ENCODE measurements at regions of chr20 and their contacts with region 1.

Region 1: DNA sequence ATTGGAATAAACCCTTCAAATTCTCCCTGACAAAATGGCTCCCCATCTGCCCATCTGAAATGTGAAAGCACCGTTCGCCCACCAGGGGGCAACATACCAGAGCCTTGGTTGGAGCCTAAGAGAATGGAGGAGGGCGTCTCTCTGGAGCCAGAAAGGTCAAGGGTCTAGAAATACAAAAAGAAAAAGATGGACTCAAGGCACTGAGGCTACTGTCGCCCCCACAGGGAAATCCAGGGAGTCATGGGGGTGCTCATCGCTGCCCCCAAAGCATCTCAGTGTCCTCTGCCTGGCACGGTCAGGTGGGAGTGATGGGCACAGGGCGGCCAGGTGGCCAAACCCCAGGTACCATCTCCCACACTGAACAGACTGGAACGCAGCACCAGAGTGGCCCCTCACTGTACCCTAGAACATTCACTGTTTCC is 136.3 kb downstream of the ZMYND8 start:
- DNase-seq: peak; percentile 61
- ATAC-seq: peak; percentile 60
- H3K4me3 ChIP-seq: no peak overlapping the region
- H3K27ac ChIP-seq: no peak overlapping the region
- H3K4me1 ChIP-seq: peaks cover 15% of the 10 kb centered on the region
- H3K27me3 ChIP-seq: no peaks in the 10 kb centered on the region; a peak in 1 of 5 replicates
- CTCF ChIP-seq: peak; percentile 71
- EP300 ChIP-seq: no peak
- POLR2A ChIP-seq: no peak
- RAD21 ChIP-seq: peak; percentile 42; the same call in 1 of the 2 replicates

Region 2: DNA sequence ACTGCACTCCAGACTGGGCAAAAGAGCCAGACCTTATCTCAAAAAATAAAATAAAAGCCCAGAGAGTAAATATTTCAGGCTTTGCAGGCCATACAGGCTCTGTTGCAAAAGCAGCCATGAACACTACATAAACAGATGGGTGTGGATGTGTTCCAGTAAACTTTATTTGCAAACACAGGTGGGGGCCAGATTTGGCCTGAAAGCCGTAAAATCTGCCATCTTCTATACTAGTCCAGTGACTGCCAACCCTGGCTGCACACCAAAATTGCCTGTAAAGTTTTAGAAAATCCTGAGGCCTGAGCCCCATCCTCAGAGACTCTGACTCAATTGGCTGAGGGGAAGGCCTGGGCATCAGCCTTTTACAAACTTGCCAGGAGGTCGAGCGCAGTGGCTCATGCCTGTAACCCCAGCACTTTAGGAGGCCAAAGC is 32.7 kb after region 1 on chr20:
- CTCF ChIA-PET with region 1: no interaction called
- POLR2A ChIA-PET with region 1: no interaction called
- in situ Hi-C with region 1: no loop called
- intact Hi-C with region 1: loop called (anchors 5 kb)
- DNase-seq: no peak
- ATAC-seq: no peak
- H3K4me3 ChIP-seq: no peak overlapping the region
- H3K27ac ChIP-seq: no peak overlapping the region
- H3K4me1 ChIP-seq: peaks cover 36% of the 10 kb centered on the region
- H3K27me3 ChIP-seq: no peaks in the 10 kb centered on the region
- CTCF ChIP-seq: no peak
- EP300 ChIP-seq: no peak
- POLR2A ChIP-seq: no peak
- RAD21 ChIP-seq: no peak

Measured in HepG2 (cell line).